ENCODE measurements at regions of chr11 and their contacts with region 1.

Region 1: DNA sequence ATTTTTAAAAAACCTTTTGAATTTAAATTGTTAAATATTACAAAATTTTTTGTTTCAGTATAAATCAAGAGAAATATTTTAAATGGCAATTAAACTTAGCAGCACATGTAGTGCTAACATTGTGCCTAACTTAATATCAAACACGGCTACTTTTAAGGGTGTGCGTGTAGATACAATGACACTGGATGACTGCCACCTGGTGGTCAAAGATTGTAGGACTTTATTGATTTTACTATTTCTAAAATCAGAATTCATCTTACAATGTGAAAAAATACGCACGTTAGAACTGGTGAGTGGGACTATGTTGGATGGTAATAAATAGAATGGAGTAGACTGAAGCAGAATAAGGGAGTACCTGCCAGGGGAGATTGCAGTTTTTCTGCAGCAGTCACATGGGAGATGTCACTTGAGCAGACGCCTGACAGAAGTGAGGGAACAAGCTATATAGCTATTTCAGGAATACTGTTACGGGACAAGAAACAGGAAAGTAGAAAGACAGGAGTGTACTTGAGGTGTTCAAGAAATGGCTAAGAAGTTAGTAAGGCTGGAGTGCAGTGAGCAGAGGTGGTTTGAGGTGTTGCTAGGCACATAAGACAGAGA is 52.9 kb downstream of the UVRAG start:
- DNase-seq: peak; percentile 59
- H3K4me3 ChIP-seq: no peak overlapping the region; a peak in 1 of 4 replicates
- H3K27ac ChIP-seq: no peak overlapping the region
- H3K4me1 ChIP-seq: peaks cover 0 to 3% of the 10 kb centered on the region in 2 experiments; a peak in 2 of 4 replicates
- H3K27me3 ChIP-seq: no peaks in the 10 kb centered on the region
- CTCF ChIP-seq: peak; percentile 83
- EP300 ChIP-seq: no peak
- RAD21 ChIP-seq: peak; percentile 79

Region 2: DNA sequence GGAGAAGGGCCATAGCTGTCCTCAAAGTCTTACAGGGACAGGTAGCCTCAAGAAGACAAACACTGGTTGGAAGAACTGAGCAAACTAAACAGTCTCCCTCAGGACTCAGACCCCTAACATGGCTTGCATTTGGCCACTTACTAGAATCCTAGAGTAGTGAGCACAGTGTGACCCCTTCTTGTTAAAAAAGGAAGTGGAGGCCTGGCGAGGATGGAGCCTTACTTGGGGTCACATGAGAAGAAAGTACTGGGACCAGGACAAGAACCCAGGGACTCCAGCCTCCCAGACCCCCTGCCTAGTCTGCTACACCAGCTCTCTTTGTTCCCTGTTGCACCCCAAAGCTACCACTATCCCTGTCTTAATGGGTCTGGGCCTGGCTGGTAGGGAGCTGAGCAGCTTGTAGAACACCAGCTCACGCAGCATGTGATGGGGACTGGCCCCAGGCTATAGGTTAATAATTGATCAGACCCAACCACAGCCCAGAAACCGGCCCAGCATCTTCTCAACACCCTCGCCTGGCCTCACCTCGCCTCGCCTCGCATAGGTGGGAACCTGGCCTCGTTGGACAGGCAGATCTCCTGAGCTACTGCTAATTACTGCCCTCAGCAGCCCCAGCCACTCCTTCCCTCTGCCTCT is 81.7 kb before region 1 on chr11:
- CTCF ChIA-PET with region 1: interaction called, 10 read pairs
- POLR2A ChIA-PET with region 1: no interaction called
- DNase-seq: no peak
- H3K4me3 ChIP-seq: no peak overlapping the region
- H3K27ac ChIP-seq: no peak overlapping the region
- H3K4me1 ChIP-seq: peaks cover 0 to 6% of the 10 kb centered on the region in 2 experiments; a peak in 1 of 4 replicates
- H3K27me3 ChIP-seq: no peaks in the 10 kb centered on the region
- CTCF ChIP-seq: no peak
- EP300 ChIP-seq: no peak
- RAD21 ChIP-seq: no peak

Region 3: GRCh38 chr11:75802913-75803820 is 64.7 kb before region 1 on chr11:
- CTCF ChIA-PET with region 1: interaction called, 115 read pairs
- POLR2A ChIA-PET with region 1: no interaction called
- DNase-seq: peak; percentile 79
- H3K4me3 ChIP-seq: no peak overlapping the region
- H3K27ac ChIP-seq: no peak overlapping the region
- H3K4me1 ChIP-seq: no peaks in the 10 kb centered on the region; a peak in 1 of 4 replicates
- H3K27me3 ChIP-seq: no peaks in the 10 kb centered on the region
- CTCF ChIP-seq: peak; percentile 86
- EP300 ChIP-seq: no peak
- RAD21 ChIP-seq: peak; percentile 91

Region 4: DNA sequence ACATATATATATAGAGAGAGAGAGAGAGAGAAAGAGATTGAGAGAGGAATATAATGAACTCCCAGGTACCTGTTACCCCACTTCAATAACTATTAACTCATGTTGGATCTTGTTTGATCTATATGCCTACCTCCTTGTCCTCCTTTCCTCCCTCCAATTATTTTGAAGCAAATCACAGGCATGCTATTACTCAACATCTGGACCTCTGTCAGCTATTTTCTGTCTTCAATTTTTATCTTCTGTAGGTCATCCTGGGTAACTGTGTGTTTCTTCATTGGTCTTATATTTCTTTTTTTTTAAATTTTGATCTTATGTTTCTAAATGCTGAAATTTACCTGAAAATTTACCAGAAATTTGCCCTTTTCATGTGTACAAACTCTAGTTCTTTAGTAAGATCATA is 28.0 kb before region 1 on chr11:
- CTCF ChIA-PET with region 1: interaction called, 10 read pairs
- POLR2A ChIA-PET with region 1: no interaction called
- DNase-seq: no peak
- H3K4me3 ChIP-seq: no peak overlapping the region
- H3K27ac ChIP-seq: no peak overlapping the region
- H3K4me1 ChIP-seq: peaks cover 0 to 8% of the 10 kb centered on the region in 2 experiments; a peak in 3 of 4 replicates
- H3K27me3 ChIP-seq: no peaks in the 10 kb centered on the region
- CTCF ChIP-seq: no peak
- EP300 ChIP-seq: no peak
- RAD21 ChIP-seq: no peak

Region 5: GRCh38 chr11:75878933-75879332 is 11.1 kb after region 1 on chr11:
- CTCF ChIA-PET with region 1: interaction called, 19 read pairs
- POLR2A ChIA-PET with region 1: no interaction called
- DNase-seq: no peak
- H3K4me3 ChIP-seq: no peak overlapping the region
- H3K27ac ChIP-seq: no peak overlapping the region
- H3K4me1 ChIP-seq: peaks cover 0 to 4% of the 10 kb centered on the region in 2 experiments; a peak in 1 of 4 replicates
- H3K27me3 ChIP-seq: no peaks in the 10 kb centered on the region
- CTCF ChIP-seq: no peak
- EP300 ChIP-seq: no peak
- RAD21 ChIP-seq: no peak

Region 6: DNA sequence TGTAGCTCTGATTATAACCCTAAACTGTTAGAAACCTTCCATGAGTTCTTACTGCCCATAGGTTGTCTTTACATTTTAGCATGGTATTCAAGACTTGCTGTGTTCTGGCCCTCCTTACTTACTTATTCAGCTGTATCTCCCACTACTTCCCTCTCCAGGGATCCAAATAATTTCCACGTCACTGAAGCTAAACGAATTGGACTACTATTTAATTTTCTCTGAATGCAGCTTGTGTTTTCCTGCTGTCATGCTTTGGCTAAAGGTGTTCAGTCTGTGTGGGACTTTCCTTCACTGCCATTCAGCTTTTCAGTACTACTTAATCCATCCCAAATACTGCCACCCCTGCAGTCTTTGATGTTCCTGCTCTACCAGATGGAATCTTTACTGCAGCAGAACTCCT is 35.4 kb after region 1 on chr11:
- CTCF ChIA-PET with region 1: no interaction called
- POLR2A ChIA-PET with region 1: no interaction called
- DNase-seq: no peak
- H3K4me3 ChIP-seq: no peak overlapping the region
- H3K27ac ChIP-seq: no peak overlapping the region
- H3K4me1 ChIP-seq: peaks cover 0 to 12% of the 10 kb centered on the region in 2 experiments; a peak in 2 of 4 replicates
- H3K27me3 ChIP-seq: no peaks in the 10 kb centered on the region
- CTCF ChIP-seq: no peak
- EP300 ChIP-seq: no peak
- RAD21 ChIP-seq: no peak

Measured in SK-N-SH (cell line).